OCI-LY7 (cell line): ENCODE measurements at regions of chr10 and their contacts with region 1.

Region 1: GRCh38 chr10:5583525-5584175 is 58.9 kb downstream of the CALML3 start:
- DNase-seq: peak; percentile 96
- H3K4me3 ChIP-seq: peak overlapping the region; percentile 42
- H3K27ac ChIP-seq: peak overlapping the region; percentile 88
- H3K4me1 ChIP-seq: peaks cover 87% of the 10 kb centered on the region
- CTCF ChIP-seq: no peak

Region 2: GRCh38 chr10:5595591-5596590 is 12.2 kb after region 1 on chr10:
- CTCF ChIA-PET with region 1: interaction called, 3 read pairs
- POLR2A ChIA-PET with region 1: interaction called, 13 read pairs
- intact Hi-C with region 1: no loop called
- DNase-seq: no peak
- H3K4me3 ChIP-seq: no peak overlapping the region
- H3K27ac ChIP-seq: no peak overlapping the region
- H3K4me1 ChIP-seq: peaks cover 30% of the 10 kb centered on the region
- CTCF ChIP-seq: no peak

Region 3: GRCh38 chr10:5623081-5623748 is 39.6 kb after region 1 on chr10:
- CTCF ChIA-PET with region 1: interaction called, 4 read pairs
- POLR2A ChIA-PET with region 1: interaction called, 4 read pairs
- intact Hi-C with region 1: loop called (anchors 2 kb)
- DNase-seq: peak; percentile 89
- H3K4me3 ChIP-seq: no peak overlapping the region
- H3K27ac ChIP-seq: no peak overlapping the region
- H3K4me1 ChIP-seq: peaks cover 6% of the 10 kb centered on the region
- CTCF ChIP-seq: peak; percentile 95

Region 4: GRCh38 chr10:5659702-5660528 is 76.3 kb after region 1 on chr10:
- CTCF ChIA-PET with region 1: no interaction called
- POLR2A ChIA-PET with region 1: interaction called, 3 read pairs
- intact Hi-C with region 1: loop called (anchors 2 kb)
- DNase-seq: peak; percentile 83
- H3K4me3 ChIP-seq: peak overlapping the region; percentile 30
- H3K27ac ChIP-seq: peak overlapping the region; percentile 100
- H3K4me1 ChIP-seq: peaks cover 98% of the 10 kb centered on the region
- CTCF ChIP-seq: no peak

Region 5: DNA sequence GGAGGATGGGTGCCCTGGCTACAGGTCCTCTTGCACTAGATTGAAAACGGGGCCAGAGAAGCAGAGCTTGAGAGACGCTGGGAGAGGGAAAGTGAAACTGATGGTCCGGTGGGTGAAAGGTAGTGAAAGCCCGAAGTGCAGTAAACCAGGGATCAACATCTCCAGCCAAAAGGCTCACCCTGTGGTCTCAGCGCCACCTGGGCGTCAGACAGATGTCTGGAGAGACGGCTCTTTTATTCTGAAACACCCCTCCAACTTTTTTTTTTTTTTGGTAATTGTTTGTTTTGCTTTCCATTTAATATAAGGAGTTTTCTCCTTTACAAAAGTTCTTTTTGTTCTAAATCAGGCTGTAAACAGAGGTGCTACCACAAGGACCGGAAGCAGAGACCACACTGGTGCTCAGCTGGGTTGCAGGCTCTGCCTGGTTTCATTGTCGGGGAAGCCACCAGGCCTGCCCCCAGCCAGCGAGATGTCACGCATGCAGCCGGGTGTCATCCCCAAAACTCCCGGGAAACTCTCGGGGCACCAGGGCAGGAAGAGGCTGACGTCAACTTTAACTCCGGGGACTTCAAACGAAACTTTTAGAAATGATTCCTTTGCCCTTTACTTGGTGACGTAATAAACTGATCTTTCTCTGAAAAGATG is 467.3 kb after region 1 on chr10:
- CTCF ChIA-PET with region 1: no interaction called
- POLR2A ChIA-PET with region 1: no interaction called
- intact Hi-C with region 1: loop called (anchors 10 kb)
- DNase-seq: peak; percentile 90
- H3K4me3 ChIP-seq: peak overlapping the region; percentile 63
- H3K27ac ChIP-seq: peak overlapping the region; percentile 94
- H3K4me1 ChIP-seq: peaks cover 92% of the 10 kb centered on the region
- CTCF ChIP-seq: peak; percentile 78

Region 6: DNA sequence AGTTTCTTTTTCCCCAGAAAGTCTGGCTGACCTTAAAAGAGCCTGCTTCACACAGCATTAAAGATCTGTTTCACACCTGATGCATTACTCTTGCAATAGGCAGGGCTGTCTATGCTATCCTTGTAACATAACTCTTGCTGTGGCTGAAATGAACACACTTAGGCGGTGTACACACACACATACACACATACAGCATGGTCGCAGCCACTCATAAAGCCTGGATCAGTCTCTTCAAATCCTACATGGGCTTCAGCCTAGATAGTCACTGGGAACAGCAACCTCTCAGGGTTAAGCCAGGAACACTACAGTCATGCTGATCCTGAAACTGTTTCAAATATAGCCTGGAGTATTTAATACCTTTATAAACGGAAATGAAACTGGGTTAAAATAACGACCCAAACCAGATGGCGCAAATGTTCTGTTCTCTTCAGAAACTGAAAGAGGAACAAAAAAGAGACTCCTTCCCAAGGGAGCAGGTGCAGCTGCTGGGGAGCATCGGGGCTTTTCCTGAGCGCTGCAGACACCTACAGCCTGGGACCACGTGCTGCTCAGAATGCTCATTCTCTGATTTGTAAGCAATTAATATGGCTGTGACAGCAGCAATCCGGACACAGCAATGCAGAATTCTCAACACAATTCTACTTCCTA is 1888.2 kb after region 1 on chr10:
- CTCF ChIA-PET with region 1: no interaction called
- POLR2A ChIA-PET with region 1: no interaction called
- intact Hi-C with region 1: loop called (anchors 10 kb)
- DNase-seq: peak; percentile 99
- H3K4me3 ChIP-seq: peak overlapping the region; percentile 55
- H3K27ac ChIP-seq: peak overlapping the region; percentile 91
- H3K4me1 ChIP-seq: peaks cover 75% of the 10 kb centered on the region
- CTCF ChIP-seq: no peak